HepG2 (cell line): ENCODE measurements at regions of chr17 and their contacts with region 1.

Region 1: DNA sequence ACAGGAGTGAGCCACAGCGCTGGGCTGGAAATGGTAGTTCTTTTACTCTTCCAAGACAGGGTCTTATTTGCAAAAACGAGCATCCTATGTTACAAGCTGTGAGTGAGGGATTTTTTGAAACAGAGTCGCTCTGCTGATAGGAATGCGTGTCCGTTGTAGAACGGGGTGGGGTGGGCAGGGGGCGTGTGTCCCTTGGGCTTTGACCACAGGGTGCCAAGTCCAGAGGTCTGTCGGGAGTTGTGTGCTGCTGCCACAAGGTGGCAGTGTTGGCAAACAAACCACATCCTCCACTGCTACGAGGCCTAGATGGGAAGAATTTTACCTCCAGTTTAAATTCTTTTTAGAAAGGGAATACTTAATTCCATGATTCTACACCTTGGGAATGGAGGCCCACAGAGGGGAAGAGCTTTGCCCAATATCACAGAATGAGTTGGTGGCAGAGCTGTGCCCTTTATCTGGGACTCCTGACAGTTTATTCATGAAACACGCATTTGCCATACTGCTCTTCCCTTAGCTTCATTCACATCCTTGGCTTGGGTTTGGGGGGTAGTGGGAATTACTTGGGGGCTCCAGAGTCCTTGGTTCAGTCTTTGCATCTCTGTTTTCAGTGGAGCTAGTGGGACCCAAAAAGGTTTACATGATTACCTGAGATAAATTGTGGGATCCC is 30.6 kb upstream of the ETV4 start:
- DNase-seq: peak; percentile 88
- ATAC-seq: peak; percentile 73
- H3K4me3 ChIP-seq: peak overlapping the region in 1 of 3 experiments; percentile 30; a peak in 1 of 6 replicates
- H3K27ac ChIP-seq: peak overlapping the region; percentile 45
- H3K4me1 ChIP-seq: peaks cover 99% of the 10 kb centered on the region
- H3K27me3 ChIP-seq: no peaks in the 10 kb centered on the region
- CTCF ChIP-seq: peak; percentile 99
- EP300 ChIP-seq: peak; percentile 51 to 64; a peak in 3 of 4 replicates
- POLR2A ChIP-seq: no peak
- RAD21 ChIP-seq: peak; percentile 99

Region 2: GRCh38 chr17:43530278-43531081 is 46.2 kb before region 1 on chr17:
- CTCF ChIA-PET with region 1: no interaction called
- POLR2A ChIA-PET with region 1: interaction called, 221 read pairs
- in situ Hi-C with region 1: loop called (anchors 5 kb)
- intact Hi-C with region 1: loop called (anchors 1 kb)
- DNase-seq: peak; percentile 100
- ATAC-seq: peak; percentile 74
- H3K4me3 ChIP-seq: peak overlapping the region in 2 of 3 experiments; percentile 26 to 58; a peak in 4 of 6 replicates
- H3K27ac ChIP-seq: peak overlapping the region; percentile 96
- H3K4me1 ChIP-seq: peaks cover 97% of the 10 kb centered on the region
- H3K27me3 ChIP-seq: no peaks in the 10 kb centered on the region
- CTCF ChIP-seq: peak; percentile 31; the same call in 1 of the 2 replicates
- EP300 ChIP-seq: peak; percentile 97 to 98
- POLR2A ChIP-seq: peak; percentile 82 to 93
- RAD21 ChIP-seq: peak; percentile 45

Region 3: GRCh38 chr17:43546319-43547188 is 30.1 kb before region 1 on chr17 and contains the start of gene ETV4:
- CTCF ChIA-PET with region 1: interaction called, 3 read pairs
- POLR2A ChIA-PET with region 1: interaction called, 72 read pairs
- in situ Hi-C with region 1: no loop called
- intact Hi-C with region 1: loop called (anchors 1 kb)
- DNase-seq: peak; percentile 96
- ATAC-seq: peak; percentile 68
- H3K4me3 ChIP-seq: peak within 1 kb of the TSS; percentile 84 to 89 (median 87)
- H3K27ac ChIP-seq: peak within 1 kb of the TSS; percentile 100
- H3K4me1 ChIP-seq: peaks cover 74% of the 10 kb centered on the region
- H3K27me3 ChIP-seq: peaks cover 0 to 7% of the 10 kb centered on the region in 2 experiments; a peak in 1 of 5 replicates
- CTCF ChIP-seq: no peak
- EP300 ChIP-seq: peak in 1 of 2 experiments; percentile 16; a peak in 1 of 4 replicates
- POLR2A ChIP-seq: peak; percentile 56 to 67; a peak in 2 of 4 replicates
- RAD21 ChIP-seq: no peak; the same call in 1 of the 2 replicates
- total RNA-seq, gene ETV4: 126 and 128 TPM in 2 replicates

Region 4: DNA sequence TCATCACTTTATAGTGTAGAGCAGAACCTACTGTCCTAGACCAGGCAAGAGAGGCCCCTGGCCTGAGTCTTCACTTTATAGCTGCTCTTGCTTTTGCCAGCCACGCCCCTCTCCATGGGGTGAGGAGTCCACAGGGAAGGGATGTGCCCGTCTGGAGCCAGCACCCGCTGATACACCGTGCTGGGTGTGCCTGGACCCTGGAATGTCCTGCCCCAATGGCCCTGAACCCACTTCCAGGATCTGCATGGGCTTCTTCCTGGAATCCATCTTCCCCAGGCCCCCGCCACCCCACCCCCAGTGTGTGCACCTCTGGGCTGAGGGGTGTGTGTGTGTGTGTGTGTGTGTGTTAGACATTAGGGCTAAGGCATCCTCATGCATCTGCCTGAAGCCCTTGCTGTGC is 40.2 kb after region 1 on chr17:
- CTCF ChIA-PET with region 1: no interaction called
- POLR2A ChIA-PET with region 1: no interaction called
- in situ Hi-C with region 1: no loop called
- intact Hi-C with region 1: no loop called
- DNase-seq: no peak
- ATAC-seq: peak; percentile 45
- H3K4me3 ChIP-seq: no peak overlapping the region
- H3K27ac ChIP-seq: no peak overlapping the region
- H3K4me1 ChIP-seq: peaks cover 44% of the 10 kb centered on the region
- H3K27me3 ChIP-seq: peaks cover 0 to 8% of the 10 kb centered on the region in 2 experiments; a peak in 1 of 5 replicates
- CTCF ChIP-seq: no peak
- EP300 ChIP-seq: no peak
- POLR2A ChIP-seq: no peak
- RAD21 ChIP-seq: no peak

Region 5: GRCh38 chr17:43665084-43665936 is 88.6 kb after region 1 on chr17:
- CTCF ChIA-PET with region 1: interaction called, 3 read pairs
- POLR2A ChIA-PET with region 1: interaction called, 16 read pairs
- in situ Hi-C with region 1: no loop called
- intact Hi-C with region 1: no loop called
- DNase-seq: peak; percentile 60
- ATAC-seq: peak; percentile 69
- H3K4me3 ChIP-seq: peak overlapping the region; percentile 35 to 66 (median 50)
- H3K27ac ChIP-seq: peak overlapping the region; percentile 59
- H3K4me1 ChIP-seq: peaks cover 66% of the 10 kb centered on the region
- H3K27me3 ChIP-seq: peaks cover 6 to 16% of the 10 kb centered on the region in 2 experiments; a peak in 4 of 5 replicates
- CTCF ChIP-seq: no peak
- EP300 ChIP-seq: 0 out of 4 replicates have a peak, but pooled peaks of 1 of the 2 experiments have one; percentile 15
- POLR2A ChIP-seq: no peak
- RAD21 ChIP-seq: no peak

Region 6: GRCh38 chr17:43760254-43760852 is 183.7 kb after region 1 on chr17:
- CTCF ChIA-PET with region 1: interaction called, 55 read pairs
- POLR2A ChIA-PET with region 1: no interaction called
- in situ Hi-C with region 1: loop called (anchors 5 kb)
- intact Hi-C with region 1: loop called (anchors 1 kb)
- DNase-seq: peak; percentile 90
- ATAC-seq: peak; percentile 88
- H3K4me3 ChIP-seq: no peak overlapping the region
- H3K27ac ChIP-seq: no peak overlapping the region
- H3K4me1 ChIP-seq: no peaks in the 10 kb centered on the region
- H3K27me3 ChIP-seq: peaks cover 9 to 41% of the 10 kb centered on the region in 2 experiments; a peak in 4 of 5 replicates
- CTCF ChIP-seq: peak; percentile 100
- EP300 ChIP-seq: no peak
- POLR2A ChIP-seq: no peak
- RAD21 ChIP-seq: peak; percentile 100